ENCODE measurements at regions of chr12 and their contacts with region 1.

Region 1: DNA sequence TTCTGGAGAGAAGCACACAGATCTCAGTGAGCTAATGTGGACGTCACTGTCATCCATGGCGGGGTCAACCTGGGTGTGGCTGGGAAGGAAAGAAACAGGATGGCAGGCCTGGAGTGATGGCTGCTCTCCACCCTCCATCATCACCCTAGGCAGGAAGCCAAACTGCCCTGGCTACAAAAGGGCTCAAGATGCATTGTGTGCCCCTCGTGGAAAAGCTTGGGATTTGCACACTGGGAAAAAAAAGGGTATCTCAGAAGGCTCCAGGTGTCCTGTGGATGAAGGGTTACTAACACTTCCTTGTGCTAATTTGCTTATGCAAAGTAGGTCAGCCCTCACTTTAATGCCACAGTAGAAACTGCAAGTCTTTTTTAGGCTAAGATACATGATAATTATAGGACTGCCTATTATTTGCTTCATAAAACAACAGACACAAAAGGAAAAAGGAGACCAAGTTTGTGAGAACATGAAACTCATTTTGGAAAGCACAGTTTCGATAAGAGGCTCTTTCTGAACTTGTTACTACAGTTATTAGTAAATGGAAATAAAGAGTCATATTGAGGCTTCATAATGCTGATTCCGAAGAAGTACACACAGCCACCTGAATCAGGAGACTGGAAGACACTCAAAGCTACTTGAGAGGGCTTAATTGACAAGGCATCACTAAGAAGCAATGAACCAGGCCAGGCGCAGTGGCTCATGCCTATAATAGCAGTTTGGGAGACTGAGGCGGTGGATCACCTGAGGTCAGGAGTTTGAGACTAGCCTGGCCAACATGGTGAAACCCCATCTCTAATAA is 18.9 kb downstream of the RFC5 start:
- DNase-seq: peak in 1 of 2 donors; percentile 34
- H3K4me3 ChIP-seq: no peak overlapping the region
- H3K27ac ChIP-seq: peak overlapping the region in 2 of 5 donors; percentile 7 to 23
- H3K4me1 ChIP-seq: peaks cover 0 to 16% (median 7%) of the 10 kb centered on the region in 4 donors
- H3K27me3 ChIP-seq: no peaks in the 10 kb centered on the region
- CTCF ChIP-seq: no peak
- EP300 ChIP-seq: no peak
- POLR2A ChIP-seq: no peak

Region 2: GRCh38 chr12:117818400-117818799 is 217.0 kb before region 1 on chr12:
- intact Hi-C with region 1: no loop called
- DNase-seq: no peak
- H3K4me3 ChIP-seq: no peak overlapping the region
- H3K27ac ChIP-seq: no peak overlapping the region
- H3K4me1 ChIP-seq: no peaks in the 10 kb centered on the region
- H3K27me3 ChIP-seq: no peaks in the 10 kb centered on the region
- CTCF ChIP-seq: no peak
- EP300 ChIP-seq: no peak
- POLR2A ChIP-seq: no peak

Region 3: DNA sequence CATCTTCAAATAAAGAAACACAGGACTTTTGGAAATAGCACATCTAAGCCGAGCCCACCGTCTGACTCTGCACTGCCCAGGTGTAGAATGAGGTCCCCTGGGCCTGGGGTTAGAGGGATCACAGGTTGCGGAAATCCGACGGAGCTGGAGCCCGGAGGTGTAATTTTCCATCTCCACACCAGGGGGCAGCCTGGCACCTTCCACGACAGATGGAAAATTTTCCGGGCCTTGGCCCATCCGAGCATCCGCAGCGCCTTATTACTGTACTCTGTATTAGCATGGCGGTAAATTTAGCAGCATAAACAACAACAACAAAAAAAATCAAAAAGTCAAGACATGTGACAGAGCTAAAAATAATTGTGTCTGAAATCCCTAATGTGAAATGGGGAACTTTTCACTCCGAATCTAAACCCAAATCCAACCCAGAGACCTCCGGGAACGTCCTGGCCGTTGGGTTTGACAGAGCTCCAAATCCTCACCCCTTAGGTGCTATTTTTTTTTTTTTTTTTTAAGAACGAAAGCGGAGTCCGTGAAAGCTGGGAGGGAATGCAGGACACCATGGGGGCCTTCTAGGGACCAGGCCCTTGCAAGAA is 160.5 kb before region 1 on chr12:
- intact Hi-C with region 1: loop called (anchors 10 kb)
- DNase-seq: peak; percentile 74 to 86
- H3K4me3 ChIP-seq: no peak overlapping the region
- H3K27ac ChIP-seq: no peak overlapping the region
- H3K4me1 ChIP-seq: peaks cover 0 to 5% (median 0%) of the 10 kb centered on the region in 4 donors
- H3K27me3 ChIP-seq: peaks cover 0 to 44% (median 6%) of the 10 kb centered on the region in 3 donors
- CTCF ChIP-seq: peak in 5 of 7 experiments; percentile 73 to 90 (median 84)
- EP300 ChIP-seq: no peak
- POLR2A ChIP-seq: no peak

Region 4: GRCh38 chr12:118103604-118104382 is 68.3 kb after region 1 on chr12 and contains the start of gene VSIG10:
- intact Hi-C with region 1: no loop called
- DNase-seq: peak; percentile 86 to 89
- H3K4me3 ChIP-seq: peak within 1 kb of the TSS; percentile 69 to 89 (median 74)
- H3K27ac ChIP-seq: peak within 1 kb of the TSS; percentile 79 to 91 (median 85)
- H3K4me1 ChIP-seq: peaks cover 0 to 26% (median 22%) of the 10 kb centered on the region in 4 donors
- H3K27me3 ChIP-seq: no peaks in the 10 kb centered on the region
- CTCF ChIP-seq: no peak
- EP300 ChIP-seq: no peak
- POLR2A ChIP-seq: peak in 1 of 4 donors; percentile 57
- total RNA-seq, gene VSIG10: 9.3 to 300 (median 35.5) TPM